ENCODE measurements at regions of chr3 and their contacts with region 1.

Region 1: DNA sequence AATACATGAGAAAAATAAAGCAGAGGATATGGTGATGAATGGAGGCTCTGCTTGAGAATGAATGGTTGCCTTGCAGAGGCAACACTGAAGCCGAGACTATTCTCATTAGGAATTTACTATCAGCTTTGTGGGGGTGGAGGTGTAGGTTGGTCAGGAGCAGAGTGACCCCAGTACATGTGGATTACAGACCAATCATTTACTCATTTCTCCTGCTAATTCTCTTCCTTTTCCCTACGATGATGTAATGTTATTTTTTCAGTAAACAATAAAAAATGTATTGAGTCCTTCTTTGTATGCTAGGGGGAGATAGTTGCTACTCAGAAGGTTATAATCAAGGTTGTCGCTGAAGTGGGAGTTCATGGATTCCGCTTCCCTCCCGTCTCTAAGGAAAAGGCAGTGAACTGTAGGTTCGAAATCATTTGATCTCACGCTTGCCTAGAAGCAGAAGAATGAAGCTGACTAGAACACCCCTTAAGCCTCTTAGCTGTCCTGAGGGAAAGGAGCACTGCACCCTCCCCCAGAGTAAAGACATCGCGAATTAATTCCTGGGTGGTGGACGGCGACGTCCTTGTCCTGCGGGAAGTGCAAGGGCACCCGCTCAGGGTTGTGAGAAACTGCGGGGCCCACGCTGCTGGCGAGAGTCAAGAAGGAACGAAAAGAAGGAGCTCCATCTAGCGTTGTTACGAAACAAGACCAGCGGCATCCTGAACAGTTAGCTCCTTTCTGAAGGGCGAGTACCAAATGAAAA is 213.2 kb upstream of the PFN2 start:
- DNase-seq: peak; percentile 47
- H3K4me3 Mint-ChIP-seq: no peak overlapping the region
- H3K27ac Mint-ChIP-seq: no peak overlapping the region
- H3K4me1 Mint-ChIP-seq: no peaks in the 10 kb centered on the region
- H3K27me3 Mint-ChIP-seq: peaks cover 18% of the 10 kb centered on the region

Region 2: GRCh38 chr3:149902498-149903139 is 281.2 kb before region 1 on chr3:
- CTCF ChIA-PET with region 1: no interaction called
- POLR2A ChIA-PET with region 1: no interaction called
- DNase-seq: no peak
- H3K4me3 Mint-ChIP-seq: no peak overlapping the region
- H3K27ac Mint-ChIP-seq: no peak overlapping the region
- H3K4me1 Mint-ChIP-seq: no peaks in the 10 kb centered on the region
- H3K27me3 Mint-ChIP-seq: no peaks in the 10 kb centered on the region

Region 3: DNA sequence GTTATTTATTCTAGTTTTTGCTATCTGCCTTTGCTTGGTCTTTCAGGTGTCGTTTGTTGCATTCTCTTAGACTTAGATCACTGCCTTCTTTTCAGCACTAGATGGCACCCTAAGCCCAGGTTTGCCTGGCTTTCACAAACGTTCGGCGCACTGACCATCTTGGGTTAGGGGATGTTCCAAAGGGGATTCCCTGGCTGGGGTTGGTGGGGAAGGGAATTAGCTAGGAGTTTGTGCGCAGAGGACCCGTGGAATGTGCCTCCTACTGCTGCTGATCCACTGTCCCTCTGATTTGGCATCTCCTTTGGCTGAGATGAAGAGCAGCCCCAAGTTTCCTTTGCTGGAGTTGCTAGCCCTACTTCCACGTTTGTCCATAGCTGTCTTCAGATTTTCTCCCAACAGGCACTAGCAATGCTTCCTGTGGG is 247.0 kb before region 1 on chr3:
- CTCF ChIA-PET with region 1: interaction called, 12 read pairs
- POLR2A ChIA-PET with region 1: no interaction called
- DNase-seq: peak; percentile 40
- H3K4me3 Mint-ChIP-seq: no peak overlapping the region
- H3K27ac Mint-ChIP-seq: no peak overlapping the region
- H3K4me1 Mint-ChIP-seq: peaks cover 11% of the 10 kb centered on the region
- H3K27me3 Mint-ChIP-seq: no peaks in the 10 kb centered on the region

Region 4: GRCh38 chr3:149967086-149967685 is 216.7 kb before region 1 on chr3:
- CTCF ChIA-PET with region 1: interaction called, 24 read pairs
- POLR2A ChIA-PET with region 1: no interaction called
- DNase-seq: no peak
- H3K4me3 Mint-ChIP-seq: no peak overlapping the region
- H3K27ac Mint-ChIP-seq: no peak overlapping the region
- H3K4me1 Mint-ChIP-seq: peaks cover 17% of the 10 kb centered on the region
- H3K27me3 Mint-ChIP-seq: peaks cover 21% of the 10 kb centered on the region

Region 5: DNA sequence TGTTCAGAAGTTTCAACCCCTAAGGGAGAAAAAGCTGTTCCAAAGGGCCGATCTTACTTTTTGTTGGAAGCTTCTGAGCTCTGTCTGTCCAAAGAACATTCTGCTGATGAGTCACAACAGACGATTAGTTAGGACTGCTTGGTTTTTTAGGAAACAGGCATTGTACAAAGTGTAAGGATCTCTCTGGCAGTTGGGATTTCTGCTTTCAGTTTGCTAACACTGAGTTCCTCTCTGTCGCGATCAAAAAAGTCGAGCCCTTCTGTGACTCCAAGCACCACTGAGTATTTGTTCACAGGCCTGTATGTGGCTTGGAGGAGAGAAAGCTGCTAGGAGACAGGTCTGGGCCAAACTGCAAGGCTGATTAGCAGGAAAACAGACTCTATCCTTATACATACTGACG is 121.4 kb before region 1 on chr3:
- CTCF ChIA-PET with region 1: no interaction called
- POLR2A ChIA-PET with region 1: no interaction called
- DNase-seq: no peak
- H3K4me3 Mint-ChIP-seq: no peak overlapping the region
- H3K27ac Mint-ChIP-seq: no peak overlapping the region
- H3K4me1 Mint-ChIP-seq: no peaks in the 10 kb centered on the region
- H3K27me3 Mint-ChIP-seq: peaks cover 7% of the 10 kb centered on the region

Region 6: DNA sequence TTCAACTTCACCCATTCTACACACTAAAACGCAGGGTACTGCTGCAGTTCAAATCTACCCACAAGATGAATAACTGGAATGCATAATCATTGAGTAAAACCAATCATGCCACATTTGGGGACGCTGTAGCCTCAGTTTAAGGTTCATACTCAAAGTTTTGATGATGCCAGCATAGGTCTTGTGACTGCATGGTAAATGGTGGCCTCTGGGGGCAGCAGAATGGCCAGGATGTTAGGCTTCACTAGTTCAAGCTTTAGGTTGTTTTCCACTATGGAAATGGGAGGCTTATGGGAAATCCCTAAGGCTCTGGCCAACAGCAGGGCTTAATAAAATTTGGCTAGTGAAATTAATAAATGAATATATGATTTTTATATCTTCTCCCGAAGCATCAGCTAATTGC is 119.9 kb after region 1 on chr3:
- CTCF ChIA-PET with region 1: no interaction called
- POLR2A ChIA-PET with region 1: no interaction called
- DNase-seq: no peak
- H3K4me3 Mint-ChIP-seq: no peak overlapping the region
- H3K27ac Mint-ChIP-seq: no peak overlapping the region
- H3K4me1 Mint-ChIP-seq: no peaks in the 10 kb centered on the region
- H3K27me3 Mint-ChIP-seq: peaks cover 52% of the 10 kb centered on the region

Measured in activated CD4-positive, alpha-beta memory T cell treated with anti-CD3 and anti-CD28 coated beads, Interleukin-2, amount 10 ng/mL, durations not matched to agents 7 days and 5 days (primary cell).